ENCODE measurements at regions of chr17 and their contacts with region 1.

Region 1: DNA sequence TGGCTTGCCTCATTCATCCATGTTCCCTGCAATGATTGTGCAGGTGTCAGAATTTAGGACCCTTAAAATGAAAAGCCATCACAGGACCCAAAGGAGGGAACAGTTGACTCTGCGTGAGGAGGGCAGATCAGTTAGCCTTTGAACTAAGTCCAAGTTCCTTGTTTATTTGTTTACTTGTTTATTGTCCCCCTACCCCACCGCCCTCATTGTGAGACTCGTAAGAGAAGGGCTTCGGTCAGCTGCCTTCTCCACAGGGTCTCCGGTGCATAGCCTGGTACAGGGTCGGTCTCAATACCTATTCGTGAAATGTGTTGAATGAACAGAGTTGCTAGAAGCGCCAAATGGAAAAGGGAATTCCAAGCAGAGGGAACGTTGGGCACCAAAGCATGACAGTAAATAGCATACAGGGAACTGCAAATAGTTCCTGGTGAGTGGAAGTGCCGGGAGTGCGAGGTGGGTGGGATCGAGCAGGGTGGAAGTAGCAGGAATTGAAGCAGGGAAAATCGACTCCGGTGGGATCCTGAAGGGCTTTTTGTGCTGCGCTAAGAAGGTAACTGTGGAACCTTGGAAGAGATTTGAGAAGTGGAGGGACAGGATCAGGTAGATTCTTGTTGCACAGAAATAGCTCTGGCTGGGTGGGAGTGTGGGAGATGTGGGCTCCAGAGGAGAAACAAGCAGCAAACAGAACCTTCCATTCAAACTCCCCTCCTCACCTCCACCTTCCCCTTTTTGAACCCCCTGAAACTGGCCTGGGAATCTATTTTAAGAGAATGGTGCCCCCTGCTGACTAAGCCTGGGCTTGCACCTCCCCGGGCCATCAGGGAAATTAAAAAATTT is 12.7 kb downstream of the SLC35B1 start:
- DNase-seq: no peak
- ATAC-seq: peak; percentile 71
- H3K4me3 ChIP-seq: no peak overlapping the region
- H3K27ac ChIP-seq: no peak overlapping the region
- H3K4me1 ChIP-seq: peaks cover 17% of the 10 kb centered on the region
- H3K27me3 ChIP-seq: no peaks in the 10 kb centered on the region
- CTCF ChIP-seq: peak; percentile 75 to 95 (median 93)
- EP300 ChIP-seq: no peak
- POLR2A ChIP-seq: no peak
- RAD21 ChIP-seq: peak; percentile 98

Region 2: DNA sequence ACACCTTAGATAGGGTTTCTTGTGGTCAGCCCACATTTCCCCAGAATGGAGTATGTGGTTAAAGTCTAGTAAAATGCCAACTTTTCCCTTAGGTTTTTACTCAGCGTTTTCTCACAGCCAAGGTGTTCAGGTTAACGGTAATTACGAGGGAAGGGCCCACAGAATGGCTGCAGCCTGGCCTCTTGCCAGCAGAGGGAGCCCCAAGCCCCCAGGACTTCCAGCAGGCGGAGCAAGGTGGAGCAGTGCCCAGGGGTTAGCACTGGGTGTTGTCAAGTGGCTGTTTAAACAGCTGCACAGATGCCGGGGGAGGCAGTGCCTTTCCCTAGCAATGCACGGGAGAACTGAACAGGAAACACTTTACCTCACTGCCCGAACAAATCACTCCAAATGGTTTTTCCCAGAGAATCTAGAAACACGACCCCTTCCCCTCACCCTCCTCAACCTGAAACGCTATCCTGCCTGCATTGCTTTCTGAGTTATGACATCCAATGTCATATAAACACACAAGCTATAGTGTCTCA is 287.0 kb before region 1 on chr17:
- CTCF ChIA-PET with region 1: interaction called, 4 read pairs
- POLR2A ChIA-PET with region 1: interaction called, 4 read pairs
- RAD21 ChIA-PET with region 1: no interaction called
- SMC1A ChIA-PET with region 1: no interaction called
- in situ Hi-C with region 1: loop called (anchors 5 kb)
- intact Hi-C with region 1: no loop called
- DNase-seq: no peak
- ATAC-seq: peak; percentile 100
- H3K4me3 ChIP-seq: no peak overlapping the region
- H3K27ac ChIP-seq: no peak overlapping the region
- H3K4me1 ChIP-seq: peaks cover 10% of the 10 kb centered on the region
- H3K27me3 ChIP-seq: no peaks in the 10 kb centered on the region
- CTCF ChIP-seq: peak; percentile 96 to 99 (median 98)
- EP300 ChIP-seq: no peak
- POLR2A ChIP-seq: no peak
- RAD21 ChIP-seq: peak; percentile 80

Region 3: GRCh38 chr17:49575579-49576087 is 119.4 kb before region 1 on chr17 and contains the start of gene NXPH3:
- CTCF ChIA-PET with region 1: interaction called, 483 read pairs
- POLR2A ChIA-PET with region 1: interaction called, 12 read pairs
- RAD21 ChIA-PET with region 1: interaction called, 70 read pairs
- SMC1A ChIA-PET with region 1: interaction called, 121 read pairs
- in situ Hi-C with region 1: loop called (anchors 5 kb)
- intact Hi-C with region 1: loop called (anchors 1 kb)
- DNase-seq: no peak
- ATAC-seq: peak; percentile 72
- H3K4me3 ChIP-seq: peak within 1 kb of the TSS; percentile 72
- H3K27ac ChIP-seq: no peak within 1 kb of the TSS
- H3K4me1 ChIP-seq: peaks cover 7% of the 10 kb centered on the region
- H3K27me3 ChIP-seq: peaks cover 2 to 8% of the 10 kb centered on the region in 2 experiments; a peak in 3 of 4 replicates
- CTCF ChIP-seq: peak; percentile 17 to 56 (median 45); a peak in 3 of 6 replicates
- EP300 ChIP-seq: no peak
- POLR2A ChIP-seq: no peak
- RAD21 ChIP-seq: peak; percentile 43
- polyA plus RNA-seq, gene NXPH3: not detected

Region 4: GRCh38 chr17:49616601-49617131 is 78.4 kb before region 1 on chr17:
- CTCF ChIA-PET with region 1: interaction called, 5 read pairs
- POLR2A ChIA-PET with region 1: no interaction called
- RAD21 ChIA-PET with region 1: interaction called, 3 read pairs
- SMC1A ChIA-PET with region 1: interaction called, 5 read pairs
- in situ Hi-C with region 1: no loop called
- intact Hi-C with region 1: loop called (anchors 10 kb)
- DNase-seq: no peak
- ATAC-seq: no peak
- H3K4me3 ChIP-seq: no peak overlapping the region
- H3K27ac ChIP-seq: peak overlapping the region; percentile 3; the same call in 1 of the 2 replicates
- H3K4me1 ChIP-seq: peaks cover 5% of the 10 kb centered on the region; the same call in 1 of the 2 replicates
- H3K27me3 ChIP-seq: no peaks in the 10 kb centered on the region
- CTCF ChIP-seq: no peak
- EP300 ChIP-seq: no peak
- POLR2A ChIP-seq: no peak
- RAD21 ChIP-seq: no peak

Region 5: GRCh38 chr17:49677933-49678847 is 16.9 kb before region 1 on chr17 and contains the start of gene SPOP:
- CTCF ChIA-PET with region 1: interaction called, 17 read pairs
- POLR2A ChIA-PET with region 1: interaction called, 9 read pairs
- RAD21 ChIA-PET with region 1: interaction called, 3 read pairs
- SMC1A ChIA-PET with region 1: interaction called, 12 read pairs
- in situ Hi-C with region 1: no loop called
- intact Hi-C with region 1: no loop called
- DNase-seq: peak; percentile 96
- ATAC-seq: peak; percentile 86
- H3K4me3 ChIP-seq: peak within 1 kb of the TSS; percentile 80
- H3K27ac ChIP-seq: peak within 1 kb of the TSS; percentile 89
- H3K4me1 ChIP-seq: peaks cover 4% of the 10 kb centered on the region; the same call in 1 of the 2 replicates
- H3K27me3 ChIP-seq: no peaks in the 10 kb centered on the region; a peak in 1 of 4 replicates
- CTCF ChIP-seq: no peak
- EP300 ChIP-seq: 0 out of 4 replicates have a peak, but pooled peaks of 1 of the 2 experiments have one; percentile 51
- POLR2A ChIP-seq: peak; percentile 90
- RAD21 ChIP-seq: no peak
- polyA plus RNA-seq, gene SPOP: 35.1 to 39.0 TPM

Region 6: GRCh38 chr17:49748791-49749190 is 53.7 kb after region 1 on chr17:
- CTCF ChIA-PET with region 1: interaction called, 11 read pairs
- POLR2A ChIA-PET with region 1: interaction called, 4 read pairs
- RAD21 ChIA-PET with region 1: interaction called, 17 read pairs
- SMC1A ChIA-PET with region 1: interaction called, 6 read pairs
- in situ Hi-C with region 1: no loop called
- intact Hi-C with region 1: no loop called
- DNase-seq: peak; percentile 97
- ATAC-seq: peak; percentile 91
- H3K4me3 ChIP-seq: no peak overlapping the region
- H3K27ac ChIP-seq: peak overlapping the region; percentile 92
- H3K4me1 ChIP-seq: peaks cover 57% of the 10 kb centered on the region
- H3K27me3 ChIP-seq: no peaks in the 10 kb centered on the region
- CTCF ChIP-seq: no peak
- EP300 ChIP-seq: peak; percentile 92 to 97
- POLR2A ChIP-seq: peak; percentile 52; the same call in 1 of the 2 replicates
- RAD21 ChIP-seq: no peak

Region 7: DNA sequence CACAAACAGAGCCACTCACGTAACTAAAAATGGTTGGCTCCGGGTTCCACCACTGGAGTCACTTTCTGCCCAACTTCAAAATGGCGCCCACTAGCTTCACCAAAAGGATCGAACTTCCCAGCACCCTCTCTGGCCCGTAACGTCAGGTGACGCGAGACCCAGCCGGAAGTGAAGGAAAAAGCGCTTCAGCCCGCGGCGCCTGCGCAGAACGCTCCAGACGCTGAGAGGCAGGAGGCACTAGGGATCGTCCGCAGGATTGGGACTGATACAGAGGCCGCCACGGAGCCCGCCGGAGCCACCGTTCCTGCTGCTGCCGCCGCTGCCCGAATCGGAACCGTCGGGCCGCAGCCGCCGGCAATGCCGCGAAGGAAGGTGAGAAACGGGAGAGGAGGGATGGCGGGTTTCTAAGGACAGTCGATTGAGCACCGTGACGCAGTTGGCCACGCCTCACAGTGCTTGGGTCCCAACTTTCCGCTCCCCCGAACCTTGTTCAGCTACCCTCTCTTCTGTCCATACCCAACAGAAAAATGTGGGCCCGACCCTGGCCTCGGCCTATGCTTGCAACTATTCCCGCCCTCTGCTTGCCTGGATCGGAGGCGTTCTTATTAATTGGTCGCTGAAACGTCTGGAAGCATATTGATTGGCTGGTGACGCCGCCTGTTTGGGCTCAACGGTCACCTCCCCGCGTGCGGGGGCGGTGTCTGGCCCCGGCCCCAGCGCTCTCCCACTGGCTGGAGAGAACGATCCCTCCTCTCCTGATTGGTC is 93.6 kb after region 1 on chr17 and contains the start of gene KAT7:
- CTCF ChIA-PET with region 1: interaction called, 10 read pairs
- POLR2A ChIA-PET with region 1: interaction called, 7 read pairs
- RAD21 ChIA-PET with region 1: interaction called, 12 read pairs
- SMC1A ChIA-PET with region 1: interaction called, 6 read pairs
- in situ Hi-C with region 1: no loop called
- intact Hi-C with region 1: no loop called
- DNase-seq: peak; percentile 99
- ATAC-seq: peak; percentile 96
- H3K4me3 ChIP-seq: peak within 1 kb of the TSS; percentile 91
- H3K27ac ChIP-seq: peak within 1 kb of the TSS; percentile 99
- H3K4me1 ChIP-seq: peaks cover 6% of the 10 kb centered on the region
- H3K27me3 ChIP-seq: no peaks in the 10 kb centered on the region
- CTCF ChIP-seq: peak in 1 of 3 experiments; percentile 7; a peak in 1 of 6 replicates
- EP300 ChIP-seq: peak; percentile 37 to 48; a peak in 1 of 4 replicates
- POLR2A ChIP-seq: peak; percentile 89
- RAD21 ChIP-seq: no peak
- polyA plus RNA-seq, gene KAT7: 6.6 to 8.7 TPM